ENCODE measurements at regions of chr1 and their contacts with region 1.

Region 1: DNA sequence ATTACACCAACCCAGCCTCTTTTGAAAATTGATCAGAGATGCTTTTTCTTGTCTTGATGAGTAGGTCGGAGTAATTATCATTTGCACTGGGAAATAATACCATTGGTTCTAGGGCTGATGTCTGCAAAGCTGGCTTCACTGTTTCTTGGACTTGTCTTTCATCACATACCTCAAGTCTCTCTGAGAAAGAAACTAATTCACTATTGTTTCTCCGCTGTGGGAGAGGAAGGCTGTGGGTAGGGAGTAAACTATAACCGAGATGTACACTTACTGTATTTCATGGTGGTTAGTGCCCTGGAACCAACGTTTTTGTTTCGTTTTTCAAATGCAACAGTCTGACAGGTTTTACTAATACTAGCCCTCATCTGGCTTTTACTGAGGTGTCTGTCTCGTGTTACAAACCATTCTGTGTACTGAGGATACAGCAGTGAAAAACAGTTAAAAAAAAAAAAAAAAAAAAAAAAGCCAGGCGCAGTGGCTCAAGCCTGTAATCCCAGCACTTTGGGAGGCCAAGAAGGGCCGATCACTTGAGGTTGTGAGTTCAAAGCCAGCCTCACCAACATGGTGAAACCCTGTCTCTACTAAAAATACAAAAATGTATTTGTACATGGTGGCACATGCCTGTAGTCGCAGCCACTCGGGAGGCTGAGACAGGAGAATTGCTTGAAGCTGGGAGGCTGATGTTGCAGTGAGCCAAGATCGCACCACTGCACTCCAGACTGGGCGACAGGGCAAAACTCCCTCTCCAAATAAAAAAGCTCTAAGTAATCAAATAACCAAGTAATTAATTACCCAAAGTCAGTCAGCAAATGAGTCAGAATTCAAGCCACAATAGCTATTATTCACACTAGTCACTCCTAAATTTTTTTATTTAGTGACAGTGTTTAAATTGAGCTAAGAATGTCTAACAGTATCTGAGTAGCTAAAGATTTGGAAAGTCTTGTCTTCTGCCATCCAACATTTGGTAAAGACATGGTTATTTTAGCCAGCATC is 23.3 kb downstream of the TOMM20 start:
- DNase-seq: no peak
- H3K4me3 Mint-ChIP-seq: peak overlapping the region; percentile 38
- H3K27ac Mint-ChIP-seq: peak overlapping the region; percentile 85
- H3K4me1 Mint-ChIP-seq: peaks cover 28% of the 10 kb centered on the region
- H3K27me3 Mint-ChIP-seq: no peaks in the 10 kb centered on the region

Region 2: GRCh38 chr1:235128456-235129328 is 23.3 kb after region 1 on chr1 and contains the start of gene TOMM20:
- intact Hi-C with region 1: loop called (anchors 2 kb)
- DNase-seq: peak; percentile 95
- H3K4me3 Mint-ChIP-seq: peak within 1 kb of the TSS; percentile 98
- H3K27ac Mint-ChIP-seq: peak within 1 kb of the TSS; percentile 97
- H3K4me1 Mint-ChIP-seq: peaks cover 37% of the 10 kb centered on the region
- H3K27me3 Mint-ChIP-seq: no peaks in the 10 kb centered on the region
- total RNA-seq, gene TOMM20: 105 and 118 TPM in 2 replicates

Region 3: DNA sequence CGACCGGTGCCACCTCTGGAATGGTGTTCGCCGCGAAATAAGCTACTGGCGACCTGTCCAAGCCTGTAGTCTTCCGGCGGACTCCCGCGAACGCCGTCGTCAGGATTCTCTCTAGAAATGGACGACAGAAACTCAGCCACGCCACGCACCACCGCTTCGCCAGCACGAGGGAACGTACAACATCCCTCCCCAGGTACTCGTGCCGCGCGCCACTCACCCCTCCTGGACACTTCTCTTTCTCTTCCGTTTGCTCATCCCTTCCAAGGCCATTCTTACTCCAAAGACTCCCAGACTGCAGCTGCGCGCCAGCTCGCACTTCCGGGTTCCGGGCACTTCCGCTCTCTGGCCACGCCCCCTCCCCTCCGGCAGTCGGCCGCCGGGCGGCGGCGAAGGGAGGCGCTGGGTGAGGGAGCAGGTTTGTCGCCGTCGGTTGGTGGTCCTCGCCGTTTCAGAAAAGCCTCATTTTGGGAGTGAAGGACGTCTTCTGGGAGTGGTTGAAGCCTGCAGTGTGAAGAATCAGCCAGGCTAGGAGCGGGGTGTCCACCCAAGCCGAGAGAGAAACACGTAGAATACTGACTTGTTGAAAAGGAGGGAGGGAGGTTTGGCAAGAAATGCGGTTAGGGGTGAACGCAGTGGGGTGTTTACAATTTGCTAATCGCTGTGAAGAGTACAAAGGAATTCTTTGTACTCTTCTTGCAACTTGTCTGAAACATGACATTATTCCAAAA is 55.8 kb after region 1 on chr1 and contains the start of gene RBM34:
- intact Hi-C with region 1: loop called (anchors 1 kb)
- DNase-seq: peak; percentile 91
- H3K4me3 Mint-ChIP-seq: peak within 1 kb of the TSS; percentile 99
- H3K27ac Mint-ChIP-seq: peak within 1 kb of the TSS; percentile 97
- H3K4me1 Mint-ChIP-seq: peaks cover 13% of the 10 kb centered on the region
- H3K27me3 Mint-ChIP-seq: no peaks in the 10 kb centered on the region
- total RNA-seq, gene RBM34: 122 and 125 TPM in 2 replicates

Region 4: GRCh38 chr1:235246022-235246991 is 141.0 kb after region 1 on chr1:
- intact Hi-C with region 1: loop called (anchors 10 kb)
- DNase-seq: no peak
- H3K4me3 Mint-ChIP-seq: peak overlapping the region; percentile 62
- H3K27ac Mint-ChIP-seq: peak overlapping the region; percentile 80
- H3K4me1 Mint-ChIP-seq: peaks cover 50% of the 10 kb centered on the region
- H3K27me3 Mint-ChIP-seq: no peaks in the 10 kb centered on the region

Region 5: GRCh38 chr1:235415008-235415904 is 309.9 kb after region 1 on chr1:
- intact Hi-C with region 1: loop called (anchors 1 kb)
- DNase-seq: peak; percentile 38
- H3K4me3 Mint-ChIP-seq: no peak overlapping the region
- H3K27ac Mint-ChIP-seq: no peak overlapping the region
- H3K4me1 Mint-ChIP-seq: peaks cover 6% of the 10 kb centered on the region
- H3K27me3 Mint-ChIP-seq: no peaks in the 10 kb centered on the region

Region 6: DNA sequence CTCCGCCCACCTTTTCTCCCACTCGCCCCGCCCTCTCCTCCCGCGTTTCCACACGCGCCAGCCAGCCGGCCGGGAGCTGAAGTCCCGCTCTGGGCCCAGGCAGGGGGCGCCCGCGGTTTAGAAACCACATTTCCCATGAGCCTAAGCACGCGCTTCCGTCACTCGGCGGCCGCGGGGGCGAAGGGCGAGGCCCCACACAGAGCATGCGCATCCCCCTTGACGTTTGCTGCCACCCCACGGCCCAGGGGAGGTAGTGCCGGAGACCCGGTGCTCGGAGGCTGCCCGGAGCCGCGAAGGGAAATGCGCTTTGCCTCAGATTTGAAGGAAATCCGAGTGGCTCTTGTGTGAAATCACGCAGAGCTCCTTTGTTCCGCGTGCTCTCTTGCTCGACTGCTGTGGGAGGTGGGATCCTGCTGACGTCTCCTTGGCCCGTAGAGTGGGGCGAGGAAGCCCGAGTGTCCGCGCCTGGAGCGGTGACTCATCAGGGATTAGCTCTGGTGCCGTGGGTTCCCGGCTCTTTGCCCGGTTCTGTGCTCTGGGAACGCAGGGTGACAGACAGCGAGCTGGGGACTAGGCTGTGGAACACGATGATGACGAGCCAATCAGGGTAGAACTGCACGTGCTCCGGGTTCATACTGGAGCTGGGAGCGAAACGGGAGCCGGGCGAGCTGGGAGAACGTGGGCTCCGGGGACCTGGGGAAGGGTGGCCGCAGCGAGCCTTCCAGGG is 399.3 kb after region 1 on chr1:
- intact Hi-C with region 1: loop called (anchors 10 kb)
- DNase-seq: peak; percentile 98
- H3K4me3 Mint-ChIP-seq: peak overlapping the region; percentile 94
- H3K27ac Mint-ChIP-seq: peak overlapping the region; percentile 92
- H3K4me1 Mint-ChIP-seq: peaks cover 32% of the 10 kb centered on the region
- H3K27me3 Mint-ChIP-seq: peaks cover 6% of the 10 kb centered on the region

Measured in activated T-helper 2 cell treated with anti-CD3 and anti-CD28 coated beads, Interferon-gamma antibody, Interleukin-2, Interleukin-4, amounts not matched to agents 10 μg/mL and 5 μg/mL and 100 μg/mL, durations not matched to agents 14 hours and 24 hours and 36 hours (primary cell).